PC-9 (cell line): ENCODE measurements at regions of chr1 and their contacts with region 1.

Region 1: GRCh38 chr1:27968694-27969093 is 8.9 kb downstream of the XKR8 start:
- DNase-seq: peak; percentile 68 to 90
- H3K4me3 ChIP-seq: 0 out of 2 replicates have a peak overlapping the region, but pooled peaks have one; percentile 29
- H3K27ac ChIP-seq: peak overlapping the region; percentile 83
- H3K4me1 ChIP-seq: peaks cover 28% of the 10 kb centered on the region
- H3K27me3 ChIP-seq: no peaks in the 10 kb centered on the region
- CTCF ChIP-seq: no peak

Region 2: DNA sequence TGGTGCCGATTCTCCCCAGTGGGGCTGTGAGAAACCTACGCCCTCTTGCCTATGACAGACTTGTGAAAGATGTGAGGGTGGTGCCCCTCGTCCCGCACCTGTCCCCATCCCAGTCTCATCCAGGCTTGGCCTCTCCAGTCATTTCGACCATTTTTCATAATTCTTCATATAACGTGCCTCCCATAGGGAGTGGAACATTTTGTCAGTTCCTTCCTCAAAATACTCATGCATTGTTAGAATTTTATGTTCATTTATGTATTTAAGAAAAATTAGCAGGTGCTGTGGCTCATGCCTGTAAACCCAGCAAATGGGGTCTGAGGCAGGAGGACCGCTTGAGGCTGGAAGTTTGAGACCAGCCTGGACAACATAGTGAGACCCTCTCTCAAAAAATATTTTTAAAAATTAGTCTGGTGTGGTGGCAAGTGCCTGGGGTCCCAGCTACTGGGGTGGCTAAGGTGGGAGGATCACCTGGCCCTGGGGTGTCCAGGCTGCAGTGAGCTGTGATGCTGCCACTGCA is 53.6 kb before region 1 on chr1:
- CTCF ChIA-PET with region 1: no interaction called
- POLR2A ChIA-PET with region 1: no interaction called
- intact Hi-C with region 1: no loop called
- DNase-seq: no peak
- H3K4me3 ChIP-seq: peak overlapping the region; percentile 72; the same call in 1 of the 2 replicates
- H3K27ac ChIP-seq: 0 out of 2 replicates have a peak overlapping the region, but pooled peaks have one; percentile 30
- H3K4me1 ChIP-seq: no peaks in the 10 kb centered on the region
- H3K27me3 ChIP-seq: no peaks in the 10 kb centered on the region
- CTCF ChIP-seq: no peak

Region 3: GRCh38 chr1:28010969-28011368 is 42.3 kb after region 1 on chr1:
- CTCF ChIA-PET with region 1: no interaction called
- POLR2A ChIA-PET with region 1: interaction called, 12 read pairs
- intact Hi-C with region 1: no loop called
- DNase-seq: no peak
- H3K4me3 ChIP-seq: no peak overlapping the region
- H3K27ac ChIP-seq: no peak overlapping the region
- H3K4me1 ChIP-seq: no peaks in the 10 kb centered on the region
- H3K27me3 ChIP-seq: no peaks in the 10 kb centered on the region
- CTCF ChIP-seq: no peak